ENCODE measurements at regions of chr18 and their contacts with region 1.

Region 1: GRCh38 chr18:79246348-79247108 is 149.2 kb upstream of the NFATC1 start:
- DNase-seq: peak; percentile 27 to 77 (median 49)
- ATAC-seq: peak; percentile 98
- H3K4me3 ChIP-seq: no peak overlapping the region
- H3K4me3 Mint-ChIP-seq: peak overlapping the region; percentile 25 to 73 (median 54)
- H3K27ac ChIP-seq: no peak overlapping the region
- H3K27ac Mint-ChIP-seq: peak overlapping the region in 1 of 9 donors; percentile 42
- H3K4me1 ChIP-seq: no peaks in the 10 kb centered on the region
- H3K4me1 Mint-ChIP-seq: peaks cover 5 to 37% (median 15%) of the 10 kb centered on the region in 7 donors
- H3K27me3 ChIP-seq: no peaks in the 10 kb centered on the region
- H3K27me3 Mint-ChIP-seq: no peaks in the 10 kb centered on the region

Region 2: DNA sequence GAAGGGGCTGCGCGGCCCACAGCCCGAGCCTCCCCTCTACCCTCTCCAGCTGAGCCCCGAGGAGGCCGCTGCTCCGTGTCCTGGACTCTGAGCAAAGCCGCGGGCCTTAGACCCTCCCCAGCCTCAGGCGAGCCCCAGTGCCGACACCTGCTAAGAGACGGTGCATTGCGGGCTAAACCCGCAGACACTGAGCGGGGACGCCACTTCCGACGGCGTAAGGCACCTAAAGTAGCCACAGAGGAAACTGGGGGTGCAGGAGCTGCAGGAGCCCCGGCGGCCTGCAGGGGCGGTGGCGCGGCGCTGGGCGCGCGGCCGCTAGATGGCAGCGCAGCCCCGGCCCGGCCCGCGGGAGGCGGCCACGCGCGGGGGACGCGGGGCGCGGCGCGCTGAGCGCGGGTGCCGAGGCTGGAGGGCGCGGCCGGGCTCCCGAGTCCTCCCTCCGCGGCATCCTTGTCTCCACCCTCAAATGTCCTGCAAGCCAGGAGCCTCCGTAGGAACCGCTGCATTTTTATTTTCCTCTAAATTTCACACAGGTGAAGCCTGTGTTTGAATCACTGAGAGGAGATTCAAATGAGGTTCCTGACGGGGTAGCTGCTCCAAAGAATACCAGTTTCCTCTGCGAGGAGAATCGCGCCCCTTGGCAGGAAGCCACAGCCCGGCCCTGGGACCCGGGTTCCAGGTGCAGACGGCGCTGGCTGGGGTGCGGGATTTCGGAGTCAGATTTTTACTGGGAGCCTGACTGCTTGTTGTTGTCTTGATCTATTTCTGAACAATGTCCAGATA is 1346.4 kb before region 1 on chr18:
- CTCF ChIA-PET with region 1: no interaction called
- POLR2A ChIA-PET with region 1: no interaction called
- intact Hi-C with region 1: loop called (anchors 2 to 5 kb)
- DNase-seq: peak; percentile 40 to 71 (median 58)
- ATAC-seq: peak; percentile 97
- H3K4me3 ChIP-seq: peak overlapping the region; percentile 39
- H3K4me3 Mint-ChIP-seq: peak overlapping the region; percentile 9 to 81 (median 62)
- H3K27ac ChIP-seq: no peak overlapping the region
- H3K27ac Mint-ChIP-seq: no peak overlapping the region
- H3K4me1 ChIP-seq: no peaks in the 10 kb centered on the region
- H3K4me1 Mint-ChIP-seq: peaks cover 0 to 11% (median 5%) of the 10 kb centered on the region in 7 donors
- H3K27me3 ChIP-seq: no peaks in the 10 kb centered on the region
- H3K27me3 Mint-ChIP-seq: peaks cover 15 to 33% (median 22%) of the 10 kb centered on the region in 5 donors

Region 3: GRCh38 chr18:78984941-78985784 is 261.4 kb before region 1 on chr18:
- CTCF ChIA-PET with region 1: no interaction called
- POLR2A ChIA-PET with region 1: no interaction called
- intact Hi-C with region 1: loop called (anchors 1 kb)
- DNase-seq: peak in 4 of 9 donors; percentile 3 to 24 (median 12)
- ATAC-seq: peak; percentile 56
- H3K4me3 ChIP-seq: no peak overlapping the region
- H3K4me3 Mint-ChIP-seq: peak overlapping the region in 3 of 10 donors; percentile 4 to 19 (median 17)
- H3K27ac ChIP-seq: no peak overlapping the region
- H3K27ac Mint-ChIP-seq: no peak overlapping the region
- H3K4me1 ChIP-seq: no peaks in the 10 kb centered on the region
- H3K4me1 Mint-ChIP-seq: peaks cover 5 to 23% (median 15%) of the 10 kb centered on the region in 7 donors
- H3K27me3 ChIP-seq: peaks cover 6 to 15% of the 10 kb centered on the region in 2 donors
- H3K27me3 Mint-ChIP-seq: peaks cover 61 to 76% (median 73%) of the 10 kb centered on the region in 5 donors

Region 4: DNA sequence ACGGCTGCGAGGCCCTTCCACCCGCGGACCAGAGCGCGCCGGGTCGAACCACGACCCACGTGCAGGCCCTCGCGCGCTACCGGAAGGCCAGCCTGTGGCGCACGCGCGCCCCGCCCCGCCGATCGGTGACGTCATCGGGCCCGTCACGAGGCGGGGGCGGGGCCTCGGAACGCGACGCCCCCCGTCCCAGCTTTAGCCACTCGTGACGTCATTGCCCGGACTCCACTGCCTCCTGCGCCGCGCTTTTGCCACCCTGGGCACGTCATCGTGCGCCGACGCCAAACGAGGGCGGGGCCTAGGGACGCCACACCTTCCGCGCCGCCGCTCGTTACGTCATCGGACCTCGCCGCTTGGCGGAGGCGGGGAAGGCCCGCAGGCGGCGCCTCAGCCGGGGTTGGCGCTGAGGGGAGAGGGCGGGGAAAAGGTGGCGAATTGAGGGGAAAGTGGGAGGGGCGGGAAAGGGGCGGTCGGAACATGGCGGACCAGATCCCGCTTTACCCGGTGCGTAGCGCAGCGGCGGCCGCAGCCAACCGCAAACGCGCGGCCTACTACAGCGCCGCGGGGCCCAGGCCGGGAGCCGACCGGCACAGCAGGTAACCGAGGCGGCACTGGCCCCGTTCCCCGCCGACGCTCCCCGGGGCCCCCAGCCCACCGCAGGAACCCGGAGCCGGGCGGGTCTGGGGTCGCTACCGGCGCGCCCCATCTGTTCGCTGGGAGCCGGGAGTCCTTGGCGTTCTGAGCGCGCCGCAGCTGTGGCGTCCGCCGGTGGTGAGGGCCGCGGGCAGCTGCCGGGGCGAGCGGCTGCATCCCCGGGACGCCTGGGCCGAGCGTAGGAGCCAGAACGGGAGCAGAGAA is 177.4 kb before region 1 on chr18 and contains the start of gene ATP9B:
- CTCF ChIA-PET with region 1: no interaction called
- POLR2A ChIA-PET with region 1: no interaction called
- intact Hi-C with region 1: loop called (anchors 2 to 5 kb)
- DNase-seq: peak; percentile 97 to 100 (median 99)
- ATAC-seq: peak; percentile 91
- H3K4me3 ChIP-seq: peak within 1 kb of the TSS; percentile 59
- H3K4me3 Mint-ChIP-seq: peak within 1 kb of the TSS; percentile 85 to 98 (median 94)
- H3K27ac ChIP-seq: peak within 1 kb of the TSS; percentile 98
- H3K27ac Mint-ChIP-seq: peak within 1 kb of the TSS; percentile 98 to 100 (median 99)
- H3K4me1 ChIP-seq: peaks cover 12 to 29% of the 10 kb centered on the region in 2 donors
- H3K4me1 Mint-ChIP-seq: peaks cover 28 to 63% (median 51%) of the 10 kb centered on the region in 7 donors
- H3K27me3 ChIP-seq: no peaks in the 10 kb centered on the region
- H3K27me3 Mint-ChIP-seq: peaks cover under 1 to 21% (median 5%) of the 10 kb centered on the region in 5 donors
- total RNA-seq, gene ATP9B: 36.1 to 90.5 (median 90.0) TPM

Region 5: DNA sequence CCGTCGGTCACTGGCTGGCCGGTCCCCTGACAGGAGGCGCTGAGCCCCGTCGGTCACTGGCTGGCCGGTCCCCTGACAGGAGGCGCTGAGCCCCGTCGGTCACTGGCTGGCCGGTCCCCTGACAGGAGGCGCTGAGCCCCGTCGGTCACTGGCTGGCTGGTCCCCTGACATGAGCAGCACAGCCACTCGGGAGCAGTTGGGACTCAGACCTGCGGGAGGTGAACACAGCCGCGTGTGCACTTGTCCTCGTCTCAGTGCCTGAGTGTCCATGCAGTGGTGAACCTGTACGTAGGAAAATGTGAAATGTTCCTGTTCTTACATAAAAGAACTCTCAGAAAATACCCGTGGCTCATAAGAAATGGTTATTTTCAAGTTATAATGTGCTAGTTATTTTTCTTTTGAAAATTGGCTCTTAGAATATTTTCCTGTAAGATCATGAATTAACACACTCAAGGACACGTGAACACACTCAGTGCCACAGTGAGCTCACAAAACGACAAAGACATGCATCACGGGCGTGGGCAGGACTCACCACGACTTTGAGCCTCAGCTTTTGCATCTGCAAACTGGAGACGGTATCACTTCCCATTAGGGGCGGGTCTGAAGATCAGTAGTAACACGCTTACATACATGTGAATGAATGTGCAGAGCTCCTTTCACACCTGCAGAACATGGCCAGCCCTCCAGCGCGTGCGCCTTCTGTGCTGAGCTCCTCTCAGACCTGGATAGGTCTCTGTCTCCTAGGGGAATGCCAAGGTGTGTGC is 128.1 kb after region 1 on chr18:
- CTCF ChIA-PET with region 1: no interaction called
- POLR2A ChIA-PET with region 1: no interaction called
- intact Hi-C with region 1: no loop called
- DNase-seq: no peak
- ATAC-seq: peak; percentile 28
- H3K4me3 ChIP-seq: no peak overlapping the region
- H3K4me3 Mint-ChIP-seq: no peak overlapping the region
- H3K27ac ChIP-seq: no peak overlapping the region
- H3K27ac Mint-ChIP-seq: peak overlapping the region in 5 of 9 donors; percentile 22 to 63 (median 36)
- H3K4me1 ChIP-seq: peaks cover 7 to 11% of the 10 kb centered on the region in 2 donors
- H3K4me1 Mint-ChIP-seq: peaks cover 6 to 29% (median 25%) of the 10 kb centered on the region in 7 donors
- H3K27me3 ChIP-seq: no peaks in the 10 kb centered on the region
- H3K27me3 Mint-ChIP-seq: no peaks in the 10 kb centered on the region